ENCODE measurements at regions of chr19 and their contacts with region 1.

Region 1: DNA sequence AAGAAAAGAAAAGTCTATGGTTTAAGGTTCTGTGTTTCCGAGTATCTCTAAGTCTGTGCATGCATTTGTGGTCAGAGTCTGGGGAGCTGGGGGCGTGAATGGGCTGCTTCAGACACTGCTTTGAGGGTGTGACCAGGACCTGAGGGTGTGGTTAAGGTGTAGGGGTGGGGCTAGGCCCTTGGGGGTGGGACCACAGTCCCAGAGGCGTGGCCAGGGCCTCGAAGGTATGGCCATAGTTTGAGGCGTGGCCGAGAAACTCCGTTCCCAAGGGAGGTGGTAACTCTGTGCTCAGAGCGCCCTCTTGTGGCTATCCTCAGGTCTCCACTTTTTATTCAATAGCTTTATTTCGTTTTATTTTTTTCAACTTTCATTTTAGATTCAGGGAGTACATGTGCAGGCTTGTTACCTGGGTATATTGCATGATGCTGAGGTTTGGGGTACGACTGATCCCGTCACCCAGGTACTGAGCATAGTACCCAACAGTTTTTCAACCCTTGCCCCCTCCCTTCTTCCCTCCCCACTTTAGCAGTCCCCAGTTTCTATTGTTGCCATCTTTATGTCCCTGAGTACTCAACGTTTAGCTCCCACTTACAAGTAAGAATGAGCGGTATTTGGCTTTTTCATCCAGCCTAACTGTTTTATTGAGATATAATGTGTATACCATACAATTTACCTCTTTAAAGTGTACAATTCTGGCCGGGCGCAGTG is 7.0 kb upstream of the CBLC start:
- DNase-seq: peak; percentile 89 to 94
- ATAC-seq: peak; percentile 99 to 100 (median 100)
- H3K4me3 ChIP-seq: no peak overlapping the region
- H3K27ac ChIP-seq: no peak overlapping the region
- H3K4me1 ChIP-seq: no peaks in the 10 kb centered on the region
- H3K27me3 ChIP-seq: no peaks in the 10 kb centered on the region
- CTCF ChIP-seq: peak; percentile 85

Region 2: DNA sequence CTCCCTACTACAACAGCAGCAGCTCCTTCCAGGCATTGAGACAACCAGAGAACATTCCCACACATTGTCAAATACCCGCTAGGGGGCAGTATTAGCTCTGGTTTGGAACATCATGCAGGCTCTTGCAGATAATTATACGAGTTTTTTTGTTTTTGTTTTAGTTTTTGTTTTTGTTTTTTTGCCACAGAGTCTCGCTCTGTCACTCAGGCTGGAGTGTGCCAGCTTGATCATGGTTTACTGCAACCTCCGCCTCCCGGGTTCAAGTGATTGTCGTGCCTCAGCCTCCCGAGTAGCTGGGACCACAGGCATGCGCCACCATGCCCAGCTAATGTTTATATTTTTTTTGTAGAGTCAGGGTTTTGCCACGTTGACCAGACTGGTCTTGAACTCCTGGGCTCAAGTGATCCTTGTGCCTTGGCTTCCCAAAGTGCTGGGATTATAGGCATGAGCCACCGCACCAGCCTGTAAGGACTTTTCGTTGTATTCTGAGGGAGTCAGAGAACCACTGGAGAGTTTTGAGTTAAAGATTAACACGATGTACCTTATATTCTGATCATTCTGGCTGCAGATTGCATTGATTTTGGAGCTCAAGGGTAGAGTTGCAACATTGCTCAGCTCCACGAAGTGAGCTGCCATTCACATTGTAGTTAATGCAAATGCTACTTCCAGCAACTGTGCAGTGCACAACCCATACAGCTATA is 199.6 kb before region 1 on chr19:
- intact Hi-C with region 1: loop called in 1 of 2 experiments (anchors 5 kb)
- DNase-seq: no peak
- ATAC-seq: peak; percentile 63 to 73 (median 70)
- H3K4me3 ChIP-seq: no peak overlapping the region
- H3K27ac ChIP-seq: no peak overlapping the region
- H3K4me1 ChIP-seq: no peaks in the 10 kb centered on the region
- H3K27me3 ChIP-seq: peaks cover 0 to 25% (median 4%) of the 10 kb centered on the region in 3 donors
- CTCF ChIP-seq: peak; percentile 80

Region 3: GRCh38 chr19:44689056-44689895 is 81.4 kb before region 1 on chr19:
- intact Hi-C with region 1: loop called in 1 of 2 experiments (anchors 1 kb)
- DNase-seq: peak; percentile 73 to 86
- ATAC-seq: peak; percentile 59 to 77 (median 67)
- H3K4me3 ChIP-seq: no peak overlapping the region
- H3K27ac ChIP-seq: no peak overlapping the region
- H3K4me1 ChIP-seq: peaks cover 3% of the 10 kb centered on the region
- H3K27me3 ChIP-seq: no peaks in the 10 kb centered on the region
- CTCF ChIP-seq: peak; percentile 88

Region 4: DNA sequence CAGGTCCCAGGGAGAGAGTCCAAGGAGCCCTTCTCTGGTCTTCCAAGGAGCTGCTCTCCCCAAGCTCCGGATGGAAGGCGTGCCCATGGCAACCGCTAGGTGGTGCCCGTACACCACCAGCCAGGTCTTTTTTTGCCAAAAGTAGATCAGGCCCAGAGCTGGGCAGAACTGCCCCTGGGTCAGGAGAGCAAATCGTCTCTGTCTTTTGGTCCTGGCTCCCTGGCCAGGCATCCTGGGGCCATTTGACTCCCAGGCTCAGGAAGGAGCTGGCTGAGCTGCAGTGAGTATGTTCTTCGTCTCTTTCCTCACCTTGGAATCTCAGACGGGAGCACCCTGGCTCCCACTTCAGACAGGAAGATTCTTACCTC is 46.8 kb before region 1 on chr19:
- intact Hi-C with region 1: loop called (anchors 1 kb)
- DNase-seq: peak; percentile 84 to 90
- ATAC-seq: peak; percentile 91 to 98 (median 94)
- H3K4me3 ChIP-seq: no peak overlapping the region
- H3K27ac ChIP-seq: peak overlapping the region; percentile 62
- H3K4me1 ChIP-seq: peaks cover 6% of the 10 kb centered on the region
- H3K27me3 ChIP-seq: no peaks in the 10 kb centered on the region
- CTCF ChIP-seq: peak; percentile 100

Region 5: DNA sequence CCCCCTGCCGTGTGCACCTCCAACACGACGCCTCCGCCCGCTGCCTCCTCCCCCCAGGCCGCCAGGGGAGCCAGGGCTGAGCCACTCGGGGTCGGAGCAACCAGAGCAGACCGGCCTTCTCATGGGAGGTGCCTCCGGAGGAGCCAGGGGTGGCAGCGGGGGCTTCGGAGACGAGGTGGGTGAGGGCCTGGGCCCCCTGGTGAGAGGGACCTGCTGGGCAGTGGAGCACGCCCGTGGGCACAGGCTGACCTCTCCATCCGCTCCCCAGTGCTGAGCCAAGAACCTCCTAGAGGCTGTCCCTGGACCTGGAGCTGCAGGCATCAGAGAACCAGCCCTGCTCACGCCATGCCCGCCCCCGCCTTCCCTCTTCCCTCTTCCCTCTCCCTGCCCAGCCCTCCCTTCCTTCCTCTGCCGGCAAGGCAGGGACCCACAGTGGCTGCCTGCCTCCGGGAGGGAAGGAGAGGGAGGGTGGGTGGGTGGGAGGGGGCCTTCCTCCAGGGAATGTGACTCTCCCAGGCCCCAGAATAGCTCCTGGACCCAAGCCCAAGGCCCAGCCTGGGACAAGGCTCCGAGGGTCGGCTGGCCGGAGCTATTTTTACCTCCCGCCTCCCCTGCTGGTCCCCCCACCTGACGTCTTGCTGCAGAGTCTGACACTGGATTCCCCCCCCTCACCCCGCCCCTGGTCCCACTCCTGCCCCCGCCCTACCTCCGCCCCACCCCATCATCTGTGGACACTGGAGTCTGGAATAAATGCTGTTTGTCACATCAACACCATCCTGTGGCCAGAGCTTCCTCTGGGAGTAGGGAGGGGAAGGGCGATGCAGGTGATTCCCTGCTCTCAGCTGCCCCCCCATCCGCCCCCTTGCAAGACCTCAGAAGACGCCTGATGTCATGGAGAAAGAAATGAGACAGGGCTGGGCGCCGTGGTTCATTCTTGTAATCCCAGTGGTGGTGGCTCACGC is 50.2 kb after region 1 on chr19:
- intact Hi-C with region 1: no loop called
- DNase-seq: peak; percentile 52 to 69
- ATAC-seq: peak; percentile 17 to 67 (median 57)
- H3K4me3 ChIP-seq: no peak overlapping the region
- H3K27ac ChIP-seq: peak overlapping the region; percentile 36
- H3K4me1 ChIP-seq: no peaks in the 10 kb centered on the region
- H3K27me3 ChIP-seq: no peaks in the 10 kb centered on the region
- CTCF ChIP-seq: no peak

Region 6: DNA sequence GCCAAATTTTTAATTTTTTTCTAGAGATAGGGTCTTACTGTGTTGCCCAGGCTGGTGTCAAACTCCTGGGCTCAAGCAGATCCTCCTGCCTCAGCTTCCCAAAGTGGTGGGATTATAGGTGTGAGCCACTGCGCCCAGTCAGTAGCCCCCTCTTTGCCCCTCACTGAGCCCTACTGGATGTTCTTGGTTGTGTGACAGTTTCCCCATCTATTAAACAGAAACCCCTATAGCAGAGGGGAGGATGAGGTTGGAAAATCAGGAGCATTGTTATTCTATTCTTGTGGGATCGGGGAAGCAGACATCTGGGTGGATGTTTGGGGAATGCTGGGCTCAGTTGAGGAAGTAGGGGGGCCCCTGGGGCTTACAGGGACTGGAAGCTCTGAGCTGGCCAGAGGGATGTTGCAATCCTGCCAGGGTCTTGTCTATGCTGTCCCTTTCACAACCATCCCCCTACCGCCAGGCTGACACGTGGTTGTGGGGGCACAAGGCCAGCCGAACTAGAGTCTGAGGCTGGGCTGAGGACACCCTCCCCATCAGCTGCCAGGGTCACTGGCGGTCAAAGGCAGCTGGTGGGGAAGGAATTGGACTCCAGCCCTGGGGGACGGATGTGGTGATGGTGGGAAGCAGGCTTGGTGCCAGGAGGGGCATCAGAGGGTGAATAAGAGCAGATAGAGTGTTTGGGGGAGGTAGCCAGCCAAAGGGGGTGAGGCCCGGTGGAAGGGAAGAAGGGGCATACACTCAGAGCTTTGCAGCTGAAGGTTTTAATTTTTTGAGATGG is 154.6 kb after region 1 on chr19:
- intact Hi-C with region 1: no loop called
- DNase-seq: peak; percentile 84 to 94
- ATAC-seq: peak; percentile 51 to 66 (median 58)
- H3K4me3 ChIP-seq: no peak overlapping the region
- H3K27ac ChIP-seq: no peak overlapping the region
- H3K4me1 ChIP-seq: no peaks in the 10 kb centered on the region
- H3K27me3 ChIP-seq: peaks cover 0 to 11% (median 2%) of the 10 kb centered on the region in 3 donors
- CTCF ChIP-seq: no peak

Measured in psoas muscle (tissue), 8 donors.